Heart left ventricle (tissue), 16 donors: ENCODE measurements at regions of chr3 and their contacts with region 1.

Region 1: GRCh38 chr3:172367205-172368105 is 80.8 kb downstream of the GHSR start:
- DNase-seq: no peak
- ATAC-seq: peak in 2 of 4 donors; percentile 3 to 9
- H3K4me3 ChIP-seq: no peak overlapping the region
- H3K27ac ChIP-seq: peak overlapping the region in 5 of 12 donors; percentile 3 to 60 (median 33)
- H3K4me1 ChIP-seq: peaks cover 0 to 39% (median 4%) of the 10 kb centered on the region in 12 donors
- H3K27me3 ChIP-seq: no peaks in the 10 kb centered on the region
- CTCF ChIP-seq: no peak
- POLR2A ChIP-seq: no peak

Region 2: DNA sequence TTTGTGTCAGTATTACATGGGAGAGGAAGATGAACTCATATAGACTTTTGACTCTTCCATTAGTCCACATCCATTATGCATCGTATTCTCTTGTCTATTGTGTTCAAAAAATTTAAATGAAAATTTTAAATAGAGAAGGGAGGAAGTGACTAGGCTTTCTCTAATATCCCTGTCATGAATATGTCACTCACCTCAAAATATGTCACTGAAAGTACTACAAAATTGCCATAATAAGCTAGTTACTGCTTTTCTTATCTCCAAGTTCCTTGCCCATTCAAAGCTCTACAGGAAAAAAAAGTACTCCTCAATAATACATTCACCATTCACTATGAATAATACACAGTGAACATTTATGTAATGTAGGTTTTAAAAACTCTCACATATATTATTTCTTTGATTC is 103.1 kb after region 1 on chr3:
- intact Hi-C with region 1: loop called in 4 of 10 experiments (anchors 5 to 10 kb)
- DNase-seq: no peak
- ATAC-seq: no peak
- H3K4me3 ChIP-seq: no peak overlapping the region
- H3K27ac ChIP-seq: no peak overlapping the region
- H3K4me1 ChIP-seq: no peaks in the 10 kb centered on the region
- H3K27me3 ChIP-seq: no peaks in the 10 kb centered on the region
- CTCF ChIP-seq: no peak
- POLR2A ChIP-seq: no peak

Region 3: DNA sequence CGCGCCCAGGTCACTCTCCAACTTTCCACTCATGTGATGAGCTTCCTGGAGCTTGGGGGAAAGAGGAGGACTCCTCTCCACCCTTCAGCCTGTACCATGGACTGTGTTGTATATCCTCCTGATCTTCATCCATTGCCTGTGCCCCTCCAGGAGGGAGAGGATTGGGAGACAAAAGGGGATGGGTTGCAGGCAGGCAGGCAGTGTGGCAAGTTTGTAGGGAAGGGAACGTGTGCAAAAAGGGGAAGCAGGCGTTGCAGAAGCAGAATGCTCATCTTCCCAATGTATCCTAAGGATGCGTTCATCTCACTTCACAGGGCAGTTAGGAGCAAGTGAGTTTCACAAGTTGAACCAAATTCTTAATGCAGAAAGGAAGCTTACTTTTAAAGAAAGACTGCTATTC is 108.9 kb after region 1 on chr3:
- intact Hi-C with region 1: loop called in 4 of 10 experiments (anchors 5 to 10 kb)
- DNase-seq: no peak
- ATAC-seq: peak; percentile 17 to 51 (median 30)
- H3K4me3 ChIP-seq: peak overlapping the region in 8 of 12 donors; percentile 17 to 63 (median 52)
- H3K27ac ChIP-seq: peak overlapping the region in 3 of 12 donors; percentile 27 to 67 (median 59)
- H3K4me1 ChIP-seq: peaks cover 0 to 20% (median 0%) of the 10 kb centered on the region in 12 donors
- H3K27me3 ChIP-seq: no peaks in the 10 kb centered on the region
- CTCF ChIP-seq: no peak
- POLR2A ChIP-seq: no peak

Region 4: DNA sequence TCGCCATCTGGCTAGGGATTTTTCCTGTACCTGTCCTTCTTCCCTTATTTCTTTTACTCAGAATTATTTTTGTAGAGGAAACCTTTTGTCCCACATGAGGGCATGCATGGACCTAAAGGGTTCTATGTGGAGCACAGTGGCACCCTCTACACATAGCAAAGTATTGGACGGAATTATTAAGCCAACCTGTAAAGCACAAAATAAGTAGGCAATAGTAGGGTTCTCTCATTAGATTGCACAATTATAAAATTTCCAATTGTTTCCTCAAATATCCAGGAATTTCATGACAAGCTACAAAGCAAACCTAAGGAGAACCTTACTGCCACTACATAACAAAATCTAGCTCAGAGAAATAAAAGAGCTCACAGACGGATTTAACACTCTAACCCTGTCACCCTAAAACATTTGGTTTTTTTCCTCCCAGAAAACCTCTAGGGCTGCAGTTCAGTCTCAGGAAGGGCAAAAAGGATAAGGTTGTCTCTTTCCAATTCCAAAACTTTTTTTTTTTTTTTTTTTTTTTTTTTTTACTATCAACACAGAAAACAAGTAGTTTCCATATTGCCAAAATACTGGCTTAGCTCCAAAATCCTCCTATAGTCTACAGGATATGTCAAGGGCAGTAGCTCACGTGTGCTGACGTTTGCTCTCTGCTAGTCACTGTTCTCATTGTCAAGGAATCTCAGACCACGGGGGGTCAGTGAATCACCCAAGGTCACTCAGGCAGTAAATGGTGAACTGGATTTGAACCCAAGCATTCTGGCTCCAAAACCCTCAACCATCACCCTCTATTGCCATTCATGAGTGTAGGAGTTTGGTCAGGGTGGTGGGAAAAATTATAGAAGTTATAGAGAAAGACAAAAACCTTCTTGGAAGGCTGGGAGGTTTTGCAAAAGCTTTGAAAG is 291.1 kb after region 1 on chr3:
- intact Hi-C with region 1: loop called in 1 of 10 experiments (anchors 10 kb)
- DNase-seq: peak in 1 of 5 donors; percentile 47
- ATAC-seq: peak; percentile 64 to 91 (median 82)
- H3K4me3 ChIP-seq: no peak overlapping the region
- H3K27ac ChIP-seq: peak overlapping the region in 9 of 12 donors; percentile 10 to 51 (median 38)
- H3K4me1 ChIP-seq: peaks cover 0 to 23% (median 11%) of the 10 kb centered on the region in 12 donors
- H3K27me3 ChIP-seq: no peaks in the 10 kb centered on the region
- CTCF ChIP-seq: no peak
- POLR2A ChIP-seq: no peak